Ovary (tissue), 10 donors: ENCODE measurements at regions of chr2 and their contacts with region 1.

Region 1: GRCh38 chr2:119407430-119408220 is 24.0 kb upstream of the TMEM37 start:
- DNase-seq: peak in 4 of 5 donors; percentile 44 to 64 (median 50)
- H3K4me3 ChIP-seq: no peak overlapping the region
- H3K27ac ChIP-seq: no peak overlapping the region
- H3K4me1 ChIP-seq: peaks cover 3% of the 10 kb centered on the region
- H3K27me3 ChIP-seq: no peaks in the 10 kb centered on the region
- CTCF ChIP-seq: peak; percentile 75 to 86 (median 85)
- EP300 ChIP-seq: no peak
- POLR2A ChIP-seq: no peak

Region 2: GRCh38 chr2:119476301-119477021 is 68.8 kb after region 1 on chr2:
- intact Hi-C with region 1: loop called (anchors 1 to 5 kb)
- DNase-seq: peak; percentile 54 to 78 (median 69)
- H3K4me3 ChIP-seq: no peak overlapping the region
- H3K27ac ChIP-seq: no peak overlapping the region
- H3K4me1 ChIP-seq: peaks cover 2% of the 10 kb centered on the region
- H3K27me3 ChIP-seq: no peaks in the 10 kb centered on the region
- CTCF ChIP-seq: peak; percentile 88 to 96 (median 91)
- EP300 ChIP-seq: no peak
- POLR2A ChIP-seq: no peak

Region 3: GRCh38 chr2:119608553-119608952 is 200.9 kb after region 1 on chr2:
- intact Hi-C with region 1: no loop called
- DNase-seq: no peak
- H3K4me3 ChIP-seq: no peak overlapping the region
- H3K27ac ChIP-seq: no peak overlapping the region
- H3K4me1 ChIP-seq: no peaks in the 10 kb centered on the region
- H3K27me3 ChIP-seq: no peaks in the 10 kb centered on the region
- CTCF ChIP-seq: no peak
- EP300 ChIP-seq: no peak
- POLR2A ChIP-seq: no peak

Region 4: DNA sequence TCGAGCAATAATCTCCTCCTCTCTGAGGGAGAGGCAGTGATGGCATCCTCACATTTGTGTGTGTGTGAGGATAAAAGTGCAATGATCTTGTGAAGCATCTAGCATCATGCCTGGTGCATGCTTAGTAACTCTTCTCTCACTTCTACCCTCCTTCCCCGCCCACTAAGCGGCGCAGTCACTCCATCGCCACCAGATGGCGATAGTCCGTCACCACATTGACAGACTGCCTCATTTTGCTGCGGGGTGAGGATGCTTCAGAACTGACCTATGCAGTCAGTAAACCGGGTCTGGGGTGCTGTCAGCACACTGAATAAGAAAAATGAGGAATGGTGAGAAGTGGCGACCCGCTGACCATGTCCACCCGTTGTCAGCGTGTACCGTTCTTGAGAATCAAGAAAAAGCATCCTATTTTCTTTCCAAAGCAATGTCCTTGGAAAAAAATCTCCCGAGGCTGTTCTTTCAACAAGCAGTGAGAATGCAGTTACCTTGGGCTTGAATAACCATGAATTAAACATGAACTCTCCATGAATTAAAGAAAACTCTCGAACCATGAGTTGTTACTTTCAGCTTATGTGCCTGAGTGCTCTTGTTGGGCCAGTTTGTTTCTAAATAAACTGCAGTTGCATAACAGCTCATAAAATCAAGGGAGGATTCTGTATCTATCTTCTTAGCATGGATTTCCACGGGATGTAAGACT is 234.1 kb after region 1 on chr2:
- intact Hi-C with region 1: loop called in 1 of 4 experiments (anchors 10 kb)
- DNase-seq: peak; percentile 63 to 80 (median 73)
- H3K4me3 ChIP-seq: no peak overlapping the region
- H3K27ac ChIP-seq: no peak overlapping the region
- H3K4me1 ChIP-seq: no peaks in the 10 kb centered on the region
- H3K27me3 ChIP-seq: no peaks in the 10 kb centered on the region
- CTCF ChIP-seq: peak; percentile 72 to 85 (median 73)
- EP300 ChIP-seq: no peak
- POLR2A ChIP-seq: no peak

Region 5: DNA sequence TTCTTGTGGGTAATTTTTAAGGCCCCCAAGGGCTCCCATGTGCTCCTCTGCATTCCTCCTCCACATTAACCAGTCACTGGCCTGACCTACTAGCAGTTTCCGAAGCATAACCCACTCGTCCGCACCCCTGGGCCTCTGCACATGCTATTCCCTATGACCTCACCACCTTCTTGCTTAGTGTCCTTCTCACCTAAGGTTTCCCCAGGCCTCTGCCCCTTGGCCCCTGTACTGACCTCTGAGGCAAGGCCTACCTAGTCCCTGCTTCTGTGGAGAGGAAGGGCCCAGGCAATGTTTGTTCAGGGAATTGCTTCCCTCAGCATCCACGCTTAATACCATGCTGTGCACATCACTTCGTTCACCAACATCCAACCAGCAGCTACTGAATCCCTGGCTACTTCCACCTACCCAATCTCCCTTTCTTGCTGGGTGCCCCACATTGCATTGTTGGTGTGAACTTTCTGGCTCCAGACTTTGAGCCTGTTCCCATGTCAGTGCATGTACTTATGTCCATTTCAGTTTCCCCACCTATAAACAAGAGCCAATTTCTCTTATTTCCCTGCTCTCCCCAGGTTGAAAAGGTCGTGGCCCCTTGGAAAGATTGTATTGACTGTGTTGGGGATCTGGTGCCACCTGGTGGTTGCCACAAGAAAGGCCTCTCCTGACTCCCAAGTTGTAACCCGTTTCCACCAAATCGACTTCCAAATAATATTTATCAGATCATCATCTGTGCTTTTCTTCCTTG is 252.1 kb after region 1 on chr2:
- intact Hi-C with region 1: loop called in 1 of 4 experiments (anchors 10 kb)
- DNase-seq: peak in 2 of 5 donors; percentile 18 to 26
- H3K4me3 ChIP-seq: no peak overlapping the region
- H3K27ac ChIP-seq: no peak overlapping the region
- H3K4me1 ChIP-seq: no peaks in the 10 kb centered on the region
- H3K27me3 ChIP-seq: no peaks in the 10 kb centered on the region
- CTCF ChIP-seq: peak in 2 of 3 donors; percentile 15 to 26
- EP300 ChIP-seq: no peak
- POLR2A ChIP-seq: no peak